CD4-positive, alpha-beta memory T cell (primary cell): ENCODE measurements at regions of chr2 and their contacts with region 1.

Region 1: DNA sequence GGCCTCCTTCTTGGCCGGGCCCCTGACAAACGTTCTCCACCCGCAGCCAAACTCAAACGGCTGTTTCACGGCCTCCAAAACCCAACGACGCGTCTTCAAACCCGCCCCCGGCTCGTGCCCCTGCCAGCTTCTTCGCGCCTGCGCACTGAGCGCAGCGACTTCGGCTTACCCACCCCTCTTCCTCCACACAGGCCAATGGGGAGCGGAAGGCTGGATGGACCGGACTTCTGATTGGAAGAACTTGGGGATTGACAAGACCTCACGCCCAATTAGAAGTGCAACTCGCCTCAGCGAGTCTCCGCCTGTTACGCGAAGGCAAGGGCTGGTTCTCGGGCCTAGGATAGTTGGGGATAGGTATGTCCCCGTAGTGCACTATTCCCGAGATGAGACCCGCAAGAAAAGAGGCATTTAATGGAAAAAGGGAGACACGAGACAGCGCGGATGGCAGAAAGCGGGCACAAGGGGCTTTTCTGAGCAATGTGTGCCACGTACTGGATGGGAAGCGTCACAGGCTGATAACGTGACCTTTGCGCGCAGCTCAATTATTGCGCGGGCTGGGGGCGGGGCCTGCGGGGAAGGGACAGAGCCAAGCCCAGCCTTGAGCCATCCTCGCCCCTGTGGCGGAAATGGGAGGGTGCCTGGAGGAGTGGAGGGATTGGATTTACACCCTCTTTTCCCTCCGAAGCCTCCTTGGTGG is at the start of gene LAPTM4A:
- DNase-seq: peak; percentile 97 to 99 (median 99)
- H3K4me3 ChIP-seq: peak within 1 kb of the TSS; percentile 76 to 90
- H3K4me3 Mint-ChIP-seq: no peak within 1 kb of the TSS
- H3K27ac ChIP-seq: peak within 1 kb of the TSS; percentile 94
- H3K27ac Mint-ChIP-seq: no peak within 1 kb of the TSS
- H3K4me1 ChIP-seq: peaks cover 35% of the 10 kb centered on the region
- H3K4me1 Mint-ChIP-seq: peaks cover 23 to 32% (median 26%) of the 10 kb centered on the region in 4 donors
- H3K27me3 ChIP-seq: peaks cover 8% of the 10 kb centered on the region
- H3K27me3 Mint-ChIP-seq: peaks cover 13 to 15% of the 10 kb centered on the region in 2 donors
- total RNA-seq, gene LAPTM4A: 47.4 to 50.8 TPM

Region 2: GRCh38 chr2:18560031-18560796 is 1491.5 kb before region 1 on chr2 and contains the start of gene RDH14:
- CTCF ChIA-PET with region 1: no interaction called
- POLR2A ChIA-PET with region 1: interaction called, 5 read pairs
- intact Hi-C with region 1: loop called (anchors 1 kb)
- DNase-seq: peak; percentile 90 to 94 (median 91)
- H3K4me3 ChIP-seq: peak within 1 kb of the TSS; percentile 11 to 67
- H3K4me3 Mint-ChIP-seq: peak within 1 kb of the TSS; percentile 90 to 98 (median 94)
- H3K27ac ChIP-seq: peak within 1 kb of the TSS; percentile 92
- H3K27ac Mint-ChIP-seq: peak within 1 kb of the TSS; percentile 95 to 98 (median 97)
- H3K4me1 ChIP-seq: peaks cover 29% of the 10 kb centered on the region
- H3K4me1 Mint-ChIP-seq: peaks cover 24 to 48% (median 34%) of the 10 kb centered on the region in 4 donors
- H3K27me3 ChIP-seq: no peaks in the 10 kb centered on the region
- H3K27me3 Mint-ChIP-seq: no peaks in the 10 kb centered on the region
- total RNA-seq, gene RDH14: 18.0 to 19.1 TPM

Region 3: DNA sequence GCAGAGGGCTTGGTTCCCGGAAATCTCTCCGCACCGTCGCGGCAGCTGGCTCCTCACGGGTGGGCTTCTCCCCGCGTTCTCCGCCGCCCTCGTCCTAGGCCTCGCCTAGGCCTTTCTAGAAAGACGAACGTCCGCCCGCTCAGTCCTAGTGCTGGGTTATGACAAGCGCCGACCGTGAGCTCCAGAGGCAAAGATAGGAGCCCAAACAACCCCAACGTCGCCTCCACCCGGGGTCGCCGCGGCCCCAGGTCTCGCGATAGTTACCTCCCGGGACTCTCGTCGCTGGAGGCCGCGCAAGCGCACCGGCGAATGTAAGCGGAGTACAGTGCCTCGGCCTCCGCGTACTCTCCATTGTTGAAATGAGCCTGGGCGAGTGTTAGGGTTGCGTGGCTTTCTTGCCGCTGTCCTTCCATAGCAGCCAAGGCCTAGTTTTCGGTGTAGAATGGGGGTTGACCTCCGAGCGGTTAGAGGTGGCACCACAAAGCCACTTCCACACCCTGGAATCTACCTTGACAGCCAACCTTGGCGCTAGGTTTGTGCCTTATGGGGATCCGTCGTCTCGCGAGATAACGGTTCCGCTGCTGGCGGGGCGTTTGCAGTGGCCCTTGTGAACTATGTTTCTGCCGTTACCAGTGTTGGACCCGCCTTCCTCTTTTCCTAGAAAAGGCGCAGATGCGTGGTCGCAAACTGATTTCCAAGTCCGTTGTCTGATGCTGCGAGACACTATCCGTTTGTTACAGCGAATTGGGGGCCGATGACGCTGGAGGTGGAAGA is 150.1 kb before region 1 on chr2 and contains the start of gene TTC32:
- CTCF ChIA-PET with region 1: interaction called, 3 read pairs
- POLR2A ChIA-PET with region 1: interaction called, 17 read pairs
- intact Hi-C with region 1: loop called (anchors 1 kb)
- DNase-seq: peak; percentile 95 to 98 (median 97)
- H3K4me3 ChIP-seq: peak within 1 kb of the TSS; percentile 59 to 63
- H3K4me3 Mint-ChIP-seq: peak within 1 kb of the TSS; percentile 92 to 99 (median 96)
- H3K27ac ChIP-seq: peak within 1 kb of the TSS; percentile 92
- H3K27ac Mint-ChIP-seq: peak within 1 kb of the TSS; percentile 87 to 100 (median 98)
- H3K4me1 ChIP-seq: peaks cover 37% of the 10 kb centered on the region
- H3K4me1 Mint-ChIP-seq: peaks cover 18 to 45% (median 29%) of the 10 kb centered on the region in 4 donors
- H3K27me3 ChIP-seq: no peaks in the 10 kb centered on the region
- H3K27me3 Mint-ChIP-seq: no peaks in the 10 kb centered on the region
- total RNA-seq, gene TTC32: 44.4 to 48.7 TPM

Region 4: GRCh38 chr2:20015472-20016083 is 36.1 kb before region 1 on chr2:
- CTCF ChIA-PET with region 1: interaction called, 20 read pairs
- POLR2A ChIA-PET with region 1: interaction called, 5 read pairs
- intact Hi-C with region 1: loop called (anchors 5 kb)
- DNase-seq: peak in 4 of 5 donors; percentile 31 to 46 (median 35)
- H3K4me3 ChIP-seq: no peak overlapping the region
- H3K4me3 Mint-ChIP-seq: no peak overlapping the region
- H3K27ac ChIP-seq: no peak overlapping the region
- H3K27ac Mint-ChIP-seq: peak overlapping the region in 1 of 7 donors; percentile 38
- H3K4me1 ChIP-seq: peaks cover 12% of the 10 kb centered on the region
- H3K4me1 Mint-ChIP-seq: peaks cover 5 to 14% (median 10%) of the 10 kb centered on the region in 4 donors
- H3K27me3 ChIP-seq: peaks cover 19% of the 10 kb centered on the region
- H3K27me3 Mint-ChIP-seq: peaks cover 22 to 23% of the 10 kb centered on the region in 2 donors

Region 5: GRCh38 chr2:20650880-20651730 is 599.4 kb after region 1 on chr2 and contains the start of gene HS1BP3:
- CTCF ChIA-PET with region 1: no interaction called
- POLR2A ChIA-PET with region 1: no interaction called
- intact Hi-C with region 1: loop called (anchors 1 kb)
- DNase-seq: peak; percentile 88 to 98 (median 94)
- H3K4me3 ChIP-seq: peak within 1 kb of the TSS; percentile 50 to 87
- H3K4me3 Mint-ChIP-seq: peak within 1 kb of the TSS; percentile 87 to 93 (median 90)
- H3K27ac ChIP-seq: peak within 1 kb of the TSS; percentile 89
- H3K27ac Mint-ChIP-seq: peak within 1 kb of the TSS; percentile 92 to 98 (median 97)
- H3K4me1 ChIP-seq: peaks cover 20% of the 10 kb centered on the region
- H3K4me1 Mint-ChIP-seq: peaks cover 22 to 42% (median 36%) of the 10 kb centered on the region in 4 donors
- H3K27me3 ChIP-seq: no peaks in the 10 kb centered on the region
- H3K27me3 Mint-ChIP-seq: no peaks in the 10 kb centered on the region
- total RNA-seq, gene HS1BP3: 20.1 TPM